ENCODE measurements at regions of chr5 and their contacts with region 1.

Region 1: DNA sequence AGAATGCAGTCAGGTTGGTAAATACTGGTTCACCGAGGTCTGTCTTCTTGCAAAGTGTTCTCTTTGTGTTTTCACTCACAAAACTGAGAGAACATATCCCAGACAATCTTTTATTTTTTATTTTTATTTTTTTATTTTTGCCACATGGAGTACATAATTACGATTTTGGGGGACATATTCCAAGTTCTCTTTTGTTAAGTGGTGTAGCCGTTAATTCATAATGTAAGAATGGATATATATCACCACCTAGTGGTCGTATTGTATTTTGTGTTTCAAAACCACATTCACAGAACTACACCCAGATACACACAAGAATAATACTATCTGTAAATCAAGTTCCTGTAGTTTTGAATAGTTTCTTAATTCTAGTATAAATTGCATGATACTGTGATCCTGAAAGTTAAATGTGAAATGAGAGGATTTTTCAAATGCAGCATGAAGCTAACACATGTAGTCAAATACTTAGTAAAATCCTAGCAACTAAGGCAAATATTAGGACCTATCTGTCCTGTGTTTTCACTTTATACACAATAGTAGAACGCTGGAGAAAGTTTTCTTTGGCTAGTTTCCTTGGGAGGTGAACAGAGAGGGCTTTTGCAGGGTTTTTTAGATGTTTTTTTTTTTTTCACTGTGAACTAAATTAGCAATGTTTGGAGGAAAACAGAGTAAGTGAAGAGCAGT is 92.7 kb downstream of the VCAN start:
- DNase-seq: no peak
- ATAC-seq: peak; percentile 76
- H3K4me3 ChIP-seq: no peak overlapping the region
- H3K27ac ChIP-seq: no peak overlapping the region
- H3K4me1 ChIP-seq: peaks cover 4 to 6% of the 10 kb centered on the region in 2 donors
- H3K27me3 ChIP-seq: no peaks in the 10 kb centered on the region

Region 2: DNA sequence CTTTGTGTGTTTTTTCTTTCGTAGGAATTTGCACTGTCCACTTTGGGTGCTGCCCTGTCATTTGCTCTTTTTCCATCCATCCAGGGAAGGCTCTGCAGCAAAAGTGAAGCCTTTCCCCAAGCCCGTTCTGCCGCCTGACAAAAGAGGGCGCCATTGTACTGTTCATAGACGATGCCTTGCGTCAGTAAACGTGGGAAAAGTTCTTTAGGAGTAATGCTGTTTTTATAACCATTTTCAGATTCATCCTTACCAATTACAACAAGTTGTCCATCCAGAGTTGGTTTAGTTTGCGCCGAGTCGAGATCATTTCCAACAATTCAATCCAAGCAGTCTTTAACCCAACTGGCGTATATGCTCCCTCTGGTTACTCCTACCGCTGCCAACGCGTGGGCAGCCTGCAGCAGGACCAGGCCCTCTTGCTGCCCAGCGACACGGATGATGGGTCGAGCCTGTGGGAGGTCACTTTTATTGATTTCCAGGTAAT is 1251.8 kb before region 1 on chr5:
- intact Hi-C with region 1: loop called in 1 of 2 experiments (anchors 5 kb)
- DNase-seq: peak; percentile 75 to 87
- ATAC-seq: peak; percentile 88
- H3K4me3 ChIP-seq: peak overlapping the region; percentile 5 to 32
- H3K27ac ChIP-seq: peak overlapping the region; percentile 33 to 77
- H3K4me1 ChIP-seq: peaks cover under 1 to 4% of the 10 kb centered on the region in 2 donors
- H3K27me3 ChIP-seq: no peaks in the 10 kb centered on the region

Region 3: GRCh38 chr5:82351754-82352145 is 1212.5 kb before region 1 on chr5:
- intact Hi-C with region 1: loop called (anchors 5 to 10 kb)
- DNase-seq: no peak
- ATAC-seq: peak; percentile 83
- H3K4me3 ChIP-seq: no peak overlapping the region
- H3K27ac ChIP-seq: peak overlapping the region in 1 of 2 donors; percentile 64
- H3K4me1 ChIP-seq: peaks cover 2 to 6% of the 10 kb centered on the region in 2 donors
- H3K27me3 ChIP-seq: no peaks in the 10 kb centered on the region

Region 4: GRCh38 chr5:83085106-83085505 is 479.1 kb before region 1 on chr5:
- intact Hi-C with region 1: loop called in 1 of 2 experiments (anchors 10 kb)
- DNase-seq: no peak
- ATAC-seq: no peak
- H3K4me3 ChIP-seq: no peak overlapping the region
- H3K27ac ChIP-seq: no peak overlapping the region
- H3K4me1 ChIP-seq: no peaks in the 10 kb centered on the region
- H3K27me3 ChIP-seq: no peaks in the 10 kb centered on the region

Region 5: DNA sequence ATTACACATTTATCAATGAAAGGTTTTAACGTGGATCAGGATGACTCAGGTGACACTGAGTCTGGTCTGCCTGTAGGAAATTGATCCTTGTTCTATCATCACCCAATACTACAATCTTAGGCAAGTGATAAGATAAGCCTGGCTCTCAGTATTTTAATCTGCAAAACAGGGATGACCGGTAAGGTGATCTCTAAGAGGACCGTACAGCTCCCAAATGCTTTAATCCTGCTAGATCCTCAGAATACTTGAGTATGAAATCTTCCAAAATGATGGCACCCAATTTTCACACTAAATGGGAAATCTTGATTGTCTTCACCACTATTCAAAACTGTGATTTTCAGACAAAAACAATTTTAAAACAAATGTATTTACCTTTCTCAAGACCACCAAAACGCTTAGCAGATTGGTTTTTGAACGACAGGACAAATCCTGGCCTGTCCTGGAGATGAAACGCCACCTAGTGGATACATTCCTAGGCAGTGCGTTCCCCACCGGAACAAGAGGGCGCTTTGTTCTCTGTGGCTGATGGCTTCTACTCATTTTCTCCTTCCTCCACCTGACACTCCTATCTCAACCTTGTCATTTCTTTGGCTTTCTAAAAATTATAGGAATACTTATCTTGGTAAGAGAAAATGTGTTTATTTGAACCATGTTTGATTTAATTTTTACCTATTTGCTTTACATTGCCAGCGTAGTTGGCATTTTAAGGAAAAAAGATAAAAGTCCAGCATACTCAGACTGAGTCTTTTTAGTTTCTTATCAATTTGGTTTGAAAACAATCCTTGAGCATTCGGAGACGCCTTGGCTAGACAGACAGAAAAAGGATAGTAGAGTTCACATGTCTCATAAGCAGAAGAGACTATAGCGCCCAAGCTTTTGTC is 133.8 kb before region 1 on chr5:
- intact Hi-C with region 1: loop called in 1 of 2 experiments (anchors 5 kb)
- DNase-seq: peak in 1 of 2 donors; percentile 57
- ATAC-seq: peak; percentile 73
- H3K4me3 ChIP-seq: no peak overlapping the region
- H3K27ac ChIP-seq: no peak overlapping the region
- H3K4me1 ChIP-seq: peaks cover 0 to 2% of the 10 kb centered on the region in 2 donors
- H3K27me3 ChIP-seq: no peaks in the 10 kb centered on the region

Region 6: GRCh38 chr5:83645936-83646335 is 81.7 kb after region 1 on chr5:
- intact Hi-C with region 1: no loop called
- DNase-seq: no peak
- ATAC-seq: peak; percentile 62
- H3K4me3 ChIP-seq: no peak overlapping the region
- H3K27ac ChIP-seq: no peak overlapping the region
- H3K4me1 ChIP-seq: no peaks in the 10 kb centered on the region
- H3K27me3 ChIP-seq: no peaks in the 10 kb centered on the region

Measured in aorta (tissue), 5 donors.